ENCODE measurements at regions of chr17 and their contacts with region 1.

Region 1: DNA sequence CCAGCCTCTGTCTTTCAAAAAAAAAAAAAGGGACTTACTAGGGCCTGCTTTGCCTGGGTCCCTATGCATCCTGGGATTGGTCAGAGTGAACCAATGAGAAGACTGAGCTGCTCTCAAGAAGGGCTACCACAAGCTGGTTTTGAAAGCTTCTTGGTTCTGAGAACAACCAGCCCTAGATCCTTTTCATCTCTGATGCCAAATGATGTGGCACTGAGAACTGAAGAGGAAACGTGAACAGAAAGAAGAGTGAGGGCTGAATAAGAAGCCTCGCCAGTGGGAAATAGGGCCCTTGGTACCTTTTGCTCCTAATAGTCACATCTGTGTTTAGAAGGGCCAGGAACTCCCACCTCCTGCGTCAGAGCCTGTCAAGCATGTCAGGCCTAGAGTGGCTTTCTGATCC is 10.7 kb downstream of the TACO1 start:
- DNase-seq: peak in 10 of 35 experiments; percentile 2 to 38 (median 15)
- ATAC-seq: peak; percentile 23 to 58 (median 44)
- H3K4me3 ChIP-seq: no peak overlapping the region
- H3K4me3 Mint-ChIP-seq: peak overlapping the region in 2 of 3 donors; percentile 29 to 64
- H3K27ac ChIP-seq: peak overlapping the region; percentile 73
- H3K27ac Mint-ChIP-seq: peak overlapping the region; percentile 95 to 97
- H3K4me1 ChIP-seq: peaks cover 12 to 26% of the 10 kb centered on the region in 2 experiments
- H3K4me1 Mint-ChIP-seq: peaks cover 32 to 34% (median 32%) of the 10 kb centered on the region in 3 donors
- H3K27me3 ChIP-seq: no peaks in the 10 kb centered on the region
- H3K27me3 Mint-ChIP-seq: no peaks in the 10 kb centered on the region

Region 2: DNA sequence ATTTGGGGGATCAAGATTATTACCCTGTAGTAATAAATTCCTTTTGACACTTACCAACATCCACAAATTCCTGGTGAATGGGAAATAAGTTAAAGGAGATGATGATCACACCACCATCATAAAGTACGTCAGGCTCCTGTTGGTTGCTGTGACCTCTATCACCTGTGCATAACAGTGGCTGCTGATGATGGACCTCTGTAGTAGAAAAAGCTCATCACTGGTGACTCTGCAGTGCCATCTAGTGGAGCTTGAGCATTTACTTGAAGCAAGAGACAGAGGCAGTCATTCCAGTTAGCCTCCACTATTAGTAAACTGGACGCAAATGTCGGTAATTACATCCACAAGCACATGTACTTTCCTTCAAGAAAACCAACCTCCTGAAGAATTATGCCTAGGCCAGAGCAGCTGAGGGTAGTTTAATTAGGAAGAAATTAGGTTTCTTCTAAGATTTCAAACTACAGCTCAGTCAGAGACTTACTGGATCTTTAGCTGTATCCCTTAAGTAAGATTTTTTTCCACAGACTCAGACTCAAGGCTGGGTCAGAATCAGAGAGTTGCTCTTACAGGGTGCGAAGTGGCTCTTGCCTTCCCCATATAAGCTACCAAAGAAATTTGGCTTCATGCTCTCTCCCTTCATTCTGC is 204.5 kb before region 1 on chr17:
- CTCF ChIA-PET with region 1: interaction called, 3 to 13 read pairs
- POLR2A ChIA-PET with region 1: no interaction called
- DNase-seq: peak in 32 of 35 experiments; percentile 38 to 88 (median 57)
- ATAC-seq: peak; percentile 72 to 91 (median 77)
- H3K4me3 ChIP-seq: no peak overlapping the region
- H3K4me3 Mint-ChIP-seq: no peak overlapping the region
- H3K27ac ChIP-seq: peak overlapping the region; percentile 15
- H3K27ac Mint-ChIP-seq: peak overlapping the region in 1 of 2 donors; percentile 4
- H3K4me1 ChIP-seq: no peaks in the 10 kb centered on the region
- H3K4me1 Mint-ChIP-seq: peaks cover 0 to 5% (median 4%) of the 10 kb centered on the region in 3 donors
- H3K27me3 ChIP-seq: no peaks in the 10 kb centered on the region
- H3K27me3 Mint-ChIP-seq: no peaks in the 10 kb centered on the region

Region 3: DNA sequence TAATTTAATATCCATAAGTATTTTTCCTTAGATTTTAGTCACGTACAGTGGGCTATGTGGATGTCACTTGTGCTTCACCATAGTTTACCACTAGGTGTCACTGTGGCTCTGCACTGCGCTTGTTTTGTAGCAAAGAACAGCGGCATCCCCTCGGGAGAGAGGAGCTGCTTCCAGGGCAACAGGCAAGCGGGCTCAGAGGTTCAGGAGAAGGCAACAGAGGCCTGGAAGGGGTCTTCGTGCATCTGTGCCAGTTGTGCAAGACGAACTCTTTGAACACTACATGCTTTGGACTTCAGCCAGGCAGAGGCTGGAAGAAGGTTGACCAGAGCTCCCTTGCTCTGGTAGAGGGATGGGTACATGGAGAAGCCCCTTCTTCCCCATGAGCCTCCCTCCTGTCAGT is 185.9 kb before region 1 on chr17:
- CTCF ChIA-PET with region 1: interaction called, 27 read pairs
- POLR2A ChIA-PET with region 1: no interaction called
- DNase-seq: peak; percentile 28 to 88 (median 55)
- ATAC-seq: peak; percentile 68 to 80 (median 71)
- H3K4me3 ChIP-seq: no peak overlapping the region
- H3K4me3 Mint-ChIP-seq: no peak overlapping the region
- H3K27ac ChIP-seq: no peak overlapping the region
- H3K27ac Mint-ChIP-seq: no peak overlapping the region
- H3K4me1 ChIP-seq: peaks cover 14 to 46% of the 10 kb centered on the region in 2 experiments
- H3K4me1 Mint-ChIP-seq: peaks cover 31 to 46% (median 35%) of the 10 kb centered on the region in 3 donors
- H3K27me3 ChIP-seq: no peaks in the 10 kb centered on the region
- H3K27me3 Mint-ChIP-seq: no peaks in the 10 kb centered on the region

Region 4: GRCh38 chr17:63478791-63479494 is 132.4 kb before region 1 on chr17:
- CTCF ChIA-PET with region 1: interaction called, 4 to 13 read pairs
- POLR2A ChIA-PET with region 1: interaction called in 1 of 2 experiments, 3 read pairs
- DNase-seq: peak; percentile 33 to 83 (median 71)
- ATAC-seq: peak; percentile 66 to 83 (median 68)
- H3K4me3 ChIP-seq: no peak overlapping the region
- H3K4me3 Mint-ChIP-seq: peak overlapping the region; percentile 47 to 67 (median 59)
- H3K27ac ChIP-seq: no peak overlapping the region
- H3K27ac Mint-ChIP-seq: no peak overlapping the region
- H3K4me1 ChIP-seq: peaks cover 4 to 27% of the 10 kb centered on the region in 2 experiments
- H3K4me1 Mint-ChIP-seq: peaks cover 4 to 18% (median 11%) of the 10 kb centered on the region in 3 donors
- H3K27me3 ChIP-seq: peaks cover 2 to 59% of the 10 kb centered on the region in 2 experiments
- H3K27me3 Mint-ChIP-seq: peaks cover 5 to 15% of the 10 kb centered on the region in 2 donors

Region 5: GRCh38 chr17:63600569-63601438 is 10.6 kb before region 1 on chr17 and contains the start of gene TACO1:
- CTCF ChIA-PET with region 1: interaction called, 4 to 10 read pairs
- POLR2A ChIA-PET with region 1: interaction called, 3 to 4 read pairs
- DNase-seq: peak in 34 of 35 experiments; percentile 41 to 82 (median 66)
- ATAC-seq: peak; percentile 88 to 92 (median 89)
- H3K4me3 ChIP-seq: peak within 1 kb of the TSS; percentile 68 to 96
- H3K4me3 Mint-ChIP-seq: peak within 1 kb of the TSS; percentile 89 to 96 (median 91)
- H3K27ac ChIP-seq: peak within 1 kb of the TSS; percentile 43
- H3K27ac Mint-ChIP-seq: peak within 1 kb of the TSS; percentile 95 to 96
- H3K4me1 ChIP-seq: peaks cover 14 to 41% of the 10 kb centered on the region in 2 experiments
- H3K4me1 Mint-ChIP-seq: peaks cover 35 to 51% (median 44%) of the 10 kb centered on the region in 3 donors
- H3K27me3 ChIP-seq: no peaks in the 10 kb centered on the region
- H3K27me3 Mint-ChIP-seq: no peaks in the 10 kb centered on the region
- total RNA-seq, gene TACO1: 10.9 to 20.5 (median 18.8) TPM

Region 6: DNA sequence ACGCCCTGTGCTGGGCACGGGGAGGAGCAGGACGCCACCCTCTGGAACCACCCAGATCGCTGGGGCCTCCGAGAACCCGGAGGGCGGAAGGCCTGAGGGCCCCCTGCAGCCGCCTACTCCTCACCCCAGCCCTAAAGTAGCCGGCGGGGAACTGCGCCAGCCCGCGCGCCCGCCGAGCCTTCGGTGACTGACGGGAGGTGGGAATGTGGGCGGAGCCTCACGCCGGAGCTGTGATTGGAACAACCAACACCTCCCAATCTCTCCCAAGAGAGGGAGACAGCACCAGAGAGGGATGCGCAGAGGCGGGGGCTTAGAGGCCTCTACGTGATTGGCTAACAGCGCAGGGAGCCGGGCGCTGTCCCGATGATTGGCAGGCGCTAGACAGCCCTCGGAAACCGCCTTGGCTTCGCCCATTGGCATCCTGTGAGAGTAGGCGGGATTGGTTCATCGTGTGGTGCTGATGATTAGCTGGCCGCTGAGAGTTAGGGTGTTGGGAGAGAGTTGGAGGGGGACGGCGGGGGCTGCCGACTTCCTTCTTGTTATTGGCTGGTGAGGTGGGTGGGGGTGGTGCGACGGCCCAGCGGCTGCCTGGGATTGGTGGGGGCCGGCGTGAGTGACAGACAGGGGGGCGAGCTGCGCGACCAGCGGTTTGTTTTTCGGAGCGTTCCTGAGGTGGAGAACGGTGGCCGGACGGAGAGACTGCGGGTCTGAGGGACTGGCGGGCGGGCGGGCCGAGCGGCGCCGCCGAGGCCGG is 10.6 kb after region 1 on chr17 and contains the start of gene MAP3K3:
- CTCF ChIA-PET with region 1: interaction called in 1 of 2 experiments, 19 read pairs
- POLR2A ChIA-PET with region 1: no interaction called
- DNase-seq: peak; percentile 87 to 99 (median 97)
- ATAC-seq: peak; percentile 89 to 90 (median 89)
- H3K4me3 ChIP-seq: peak within 1 kb of the TSS; percentile 73 to 80
- H3K4me3 Mint-ChIP-seq: peak within 1 kb of the TSS; percentile 97 to 99 (median 99)
- H3K27ac ChIP-seq: peak within 1 kb of the TSS; percentile 67
- H3K27ac Mint-ChIP-seq: peak within 1 kb of the TSS; percentile 87 to 96
- H3K4me1 ChIP-seq: peaks cover 15 to 26% of the 10 kb centered on the region in 2 experiments
- H3K4me1 Mint-ChIP-seq: peaks cover 42 to 45% (median 43%) of the 10 kb centered on the region in 3 donors
- H3K27me3 ChIP-seq: no peaks in the 10 kb centered on the region
- H3K27me3 Mint-ChIP-seq: no peaks in the 10 kb centered on the region
- total RNA-seq, gene MAP3K3: 71.0 to 91.1 (median 85.4) TPM

Region 7: GRCh38 chr17:63714547-63715277 is 103.4 kb after region 1 on chr17:
- CTCF ChIA-PET with region 1: interaction called, 3 to 10 read pairs
- POLR2A ChIA-PET with region 1: no interaction called
- DNase-seq: no peak
- ATAC-seq: no peak
- H3K4me3 ChIP-seq: no peak overlapping the region
- H3K4me3 Mint-ChIP-seq: no peak overlapping the region
- H3K27ac ChIP-seq: no peak overlapping the region
- H3K27ac Mint-ChIP-seq: peak overlapping the region in 1 of 2 donors; percentile 34
- H3K4me1 ChIP-seq: peaks cover 5 to 12% of the 10 kb centered on the region in 2 experiments
- H3K4me1 Mint-ChIP-seq: peaks cover 10 to 18% (median 14%) of the 10 kb centered on the region in 3 donors
- H3K27me3 ChIP-seq: no peaks in the 10 kb centered on the region
- H3K27me3 Mint-ChIP-seq: no peaks in the 10 kb centered on the region